CD14-positive monocyte (primary cell): ENCODE measurements at regions of chr14 and their contacts with region 1.

Region 1: GRCh38 chr14:70622111-70622712 is 19.5 kb upstream of the TTC9 start:
- DNase-seq: peak in 2 of 3 donors; percentile 48 to 55
- H3K4me3 ChIP-seq: no peak overlapping the region
- H3K4me3 Mint-ChIP-seq: no peak overlapping the region
- H3K27ac ChIP-seq: no peak overlapping the region
- H3K27ac Mint-ChIP-seq: no peak overlapping the region
- H3K4me1 ChIP-seq: no peaks in the 10 kb centered on the region
- H3K4me1 Mint-ChIP-seq: no peaks in the 10 kb centered on the region
- H3K27me3 ChIP-seq: peaks cover 0 to 7% of the 10 kb centered on the region in 2 donors
- H3K27me3 Mint-ChIP-seq: peaks cover 4 to 6% (median 6%) of the 10 kb centered on the region in 3 donors
- CTCF ChIP-seq: peak; percentile 72

Region 2: DNA sequence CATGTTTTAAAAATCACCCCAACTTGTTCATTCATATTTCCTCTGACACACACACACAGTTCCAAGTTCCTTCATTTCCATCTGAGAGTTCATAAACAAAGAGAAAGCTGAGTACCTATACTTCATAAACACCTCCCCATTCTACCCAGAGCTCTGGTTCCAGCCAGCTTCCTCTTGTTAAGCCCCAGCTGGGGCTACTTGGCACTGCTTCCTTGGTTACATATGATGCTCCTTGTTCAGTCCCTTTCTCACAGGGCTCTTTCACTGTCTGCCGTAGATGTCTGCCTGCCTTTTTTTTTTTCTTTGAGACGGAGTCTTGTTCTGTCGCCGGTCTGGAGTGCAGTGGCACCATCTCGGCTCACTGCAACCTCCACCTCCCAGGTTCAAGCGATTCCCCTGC is 340.3 kb before region 1 on chr14:
- intact Hi-C with region 1: no loop called
- DNase-seq: no peak
- H3K4me3 ChIP-seq: no peak overlapping the region
- H3K4me3 Mint-ChIP-seq: no peak overlapping the region
- H3K27ac ChIP-seq: no peak overlapping the region
- H3K27ac Mint-ChIP-seq: no peak overlapping the region
- H3K4me1 ChIP-seq: no peaks in the 10 kb centered on the region
- H3K4me1 Mint-ChIP-seq: no peaks in the 10 kb centered on the region
- H3K27me3 ChIP-seq: no peaks in the 10 kb centered on the region
- H3K27me3 Mint-ChIP-seq: peaks cover 0 to 7% (median 7%) of the 10 kb centered on the region in 3 donors
- CTCF ChIP-seq: no peak

Region 3: DNA sequence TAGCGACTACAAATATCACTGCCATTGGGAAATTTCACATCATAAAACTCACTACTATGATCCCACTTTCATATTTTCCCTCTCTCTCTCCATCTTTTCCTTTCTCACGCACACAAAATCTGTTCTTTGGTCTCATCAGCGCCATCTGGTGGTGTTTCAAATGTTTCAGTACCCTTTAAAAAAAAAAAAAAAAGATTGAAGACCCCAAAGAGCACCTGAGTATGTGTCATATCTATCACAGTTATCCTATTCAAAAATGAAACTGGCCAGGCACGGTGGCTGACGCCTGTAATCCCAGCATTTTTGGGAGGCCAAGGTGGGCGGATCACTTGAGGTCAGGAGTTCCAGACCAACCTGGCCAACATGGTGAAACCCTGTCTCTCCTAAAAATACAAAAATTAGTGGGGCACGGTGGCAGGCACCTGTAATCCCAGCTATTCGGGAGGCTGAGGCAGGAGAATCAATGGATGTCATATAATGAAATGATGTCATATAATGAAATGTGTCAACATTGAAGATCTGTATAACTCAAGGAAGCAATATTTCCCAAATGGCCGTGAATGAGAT is 91.9 kb after region 1 on chr14:
- intact Hi-C with region 1: loop called in 1 of 2 experiments (anchors 5 kb)
- DNase-seq: peak; percentile 36 to 61 (median 57)
- H3K4me3 ChIP-seq: no peak overlapping the region
- H3K4me3 Mint-ChIP-seq: no peak overlapping the region
- H3K27ac ChIP-seq: no peak overlapping the region
- H3K27ac Mint-ChIP-seq: no peak overlapping the region
- H3K4me1 ChIP-seq: peaks cover 0 to 3% of the 10 kb centered on the region in 2 donors
- H3K4me1 Mint-ChIP-seq: peaks cover 4% of the 10 kb centered on the region
- H3K27me3 ChIP-seq: peaks cover 0 to 4% of the 10 kb centered on the region in 2 donors
- H3K27me3 Mint-ChIP-seq: peaks cover 2 to 8% (median 5%) of the 10 kb centered on the region in 3 donors
- CTCF ChIP-seq: peak; percentile 93

Region 4: GRCh38 chr14:70809543-70810244 is 187.5 kb after region 1 on chr14:
- intact Hi-C with region 1: loop called in 1 of 2 experiments (anchors 10 kb)
- DNase-seq: peak; percentile 44 to 53 (median 46)
- H3K4me3 ChIP-seq: peak overlapping the region; percentile 42 to 78 (median 51)
- H3K4me3 Mint-ChIP-seq: peak overlapping the region in 1 of 2 donors; percentile 84
- H3K27ac ChIP-seq: no peak overlapping the region
- H3K27ac Mint-ChIP-seq: no peak overlapping the region
- H3K4me1 ChIP-seq: peaks cover 11 to 14% of the 10 kb centered on the region in 2 donors
- H3K4me1 Mint-ChIP-seq: peaks cover 14% of the 10 kb centered on the region
- H3K27me3 ChIP-seq: peaks cover 39 to 83% of the 10 kb centered on the region in 2 donors
- H3K27me3 Mint-ChIP-seq: peaks cover 26 to 47% (median 27%) of the 10 kb centered on the region in 3 donors
- CTCF ChIP-seq: no peak

Region 5: DNA sequence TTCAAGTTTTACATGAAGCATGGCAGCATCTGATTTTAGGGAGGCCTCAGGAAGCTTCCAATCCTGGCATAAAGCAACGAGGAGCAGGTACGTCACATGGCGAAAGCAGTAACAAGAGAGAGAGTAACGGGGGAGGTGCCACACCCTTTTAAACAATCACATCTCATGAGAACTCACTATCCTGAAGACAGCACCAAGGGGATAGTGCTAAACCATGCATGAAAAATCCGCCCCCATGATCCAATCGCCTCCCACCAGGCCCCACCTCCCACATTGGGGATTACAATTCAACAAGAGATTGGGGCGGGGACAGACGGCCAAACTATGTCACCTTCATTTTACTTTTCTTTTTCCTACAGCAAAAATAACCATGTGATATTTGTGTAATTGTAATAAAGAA is 194.3 kb after region 1 on chr14:
- intact Hi-C with region 1: loop called (anchors 5 to 10 kb)
- DNase-seq: no peak
- H3K4me3 ChIP-seq: no peak overlapping the region
- H3K4me3 Mint-ChIP-seq: no peak overlapping the region
- H3K27ac ChIP-seq: no peak overlapping the region
- H3K27ac Mint-ChIP-seq: no peak overlapping the region
- H3K4me1 ChIP-seq: peaks cover 1 to 4% of the 10 kb centered on the region in 2 donors
- H3K4me1 Mint-ChIP-seq: peaks cover 12% of the 10 kb centered on the region
- H3K27me3 ChIP-seq: peaks cover 31 to 43% of the 10 kb centered on the region in 2 donors
- H3K27me3 Mint-ChIP-seq: peaks cover 15 to 36% (median 22%) of the 10 kb centered on the region in 3 donors
- CTCF ChIP-seq: no peak